ENCODE measurements at regions of chr10 and their contacts with region 1.

Region 1: DNA sequence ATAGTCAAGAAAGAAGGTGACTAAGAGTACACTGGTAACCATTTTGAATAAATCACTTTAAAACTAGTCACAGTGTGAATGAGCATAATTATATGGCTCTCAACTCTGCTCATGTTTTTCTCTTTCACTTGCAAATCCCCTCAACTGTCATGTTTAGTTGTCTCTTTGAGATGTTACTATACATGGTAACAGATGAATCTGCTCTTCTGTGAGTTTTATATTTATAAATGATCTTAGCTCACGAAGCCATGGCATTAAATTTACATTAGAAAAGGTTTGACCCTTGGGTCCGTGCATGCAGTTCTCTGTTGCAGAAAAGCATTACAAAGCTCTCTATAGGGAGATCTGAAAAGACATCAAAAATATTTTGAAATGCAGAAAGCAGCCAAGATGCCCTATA is 33.0 kb upstream of the LRRTM3 start:
- DNase-seq: no peak
- H3K4me3 ChIP-seq: no peak overlapping the region
- H3K27ac ChIP-seq: no peak overlapping the region
- H3K4me1 ChIP-seq: no peaks in the 10 kb centered on the region
- H3K27me3 ChIP-seq: no peaks in the 10 kb centered on the region
- CTCF ChIP-seq: no peak
- EP300 ChIP-seq: no peak
- POLR2A ChIP-seq: no peak

Region 2: DNA sequence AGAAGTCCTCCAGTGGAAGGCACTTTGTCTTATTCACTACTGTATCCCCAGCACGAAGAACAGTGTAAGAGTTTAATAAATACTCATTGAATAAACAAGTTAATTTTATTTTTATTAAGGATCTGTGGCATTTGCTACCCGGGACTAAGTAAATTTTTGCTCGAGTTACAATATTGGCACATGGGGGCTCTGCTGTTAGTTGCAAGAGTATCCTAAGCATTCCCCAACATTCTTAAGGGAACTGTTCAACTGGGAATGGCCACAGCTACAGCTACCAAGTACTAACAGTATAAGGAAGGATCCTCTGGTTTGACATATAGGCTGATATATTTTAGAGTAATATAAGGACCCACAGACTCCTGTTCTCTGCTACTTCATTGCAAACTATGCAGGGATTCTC is 24.2 kb after region 1 on chr10:
- in situ Hi-C with region 1: no loop called
- intact Hi-C with region 1: loop called (anchors 2 kb)
- DNase-seq: no peak
- H3K4me3 ChIP-seq: no peak overlapping the region
- H3K27ac ChIP-seq: no peak overlapping the region
- H3K4me1 ChIP-seq: no peaks in the 10 kb centered on the region
- H3K27me3 ChIP-seq: no peaks in the 10 kb centered on the region
- CTCF ChIP-seq: no peak
- EP300 ChIP-seq: no peak
- POLR2A ChIP-seq: no peak

Region 3: DNA sequence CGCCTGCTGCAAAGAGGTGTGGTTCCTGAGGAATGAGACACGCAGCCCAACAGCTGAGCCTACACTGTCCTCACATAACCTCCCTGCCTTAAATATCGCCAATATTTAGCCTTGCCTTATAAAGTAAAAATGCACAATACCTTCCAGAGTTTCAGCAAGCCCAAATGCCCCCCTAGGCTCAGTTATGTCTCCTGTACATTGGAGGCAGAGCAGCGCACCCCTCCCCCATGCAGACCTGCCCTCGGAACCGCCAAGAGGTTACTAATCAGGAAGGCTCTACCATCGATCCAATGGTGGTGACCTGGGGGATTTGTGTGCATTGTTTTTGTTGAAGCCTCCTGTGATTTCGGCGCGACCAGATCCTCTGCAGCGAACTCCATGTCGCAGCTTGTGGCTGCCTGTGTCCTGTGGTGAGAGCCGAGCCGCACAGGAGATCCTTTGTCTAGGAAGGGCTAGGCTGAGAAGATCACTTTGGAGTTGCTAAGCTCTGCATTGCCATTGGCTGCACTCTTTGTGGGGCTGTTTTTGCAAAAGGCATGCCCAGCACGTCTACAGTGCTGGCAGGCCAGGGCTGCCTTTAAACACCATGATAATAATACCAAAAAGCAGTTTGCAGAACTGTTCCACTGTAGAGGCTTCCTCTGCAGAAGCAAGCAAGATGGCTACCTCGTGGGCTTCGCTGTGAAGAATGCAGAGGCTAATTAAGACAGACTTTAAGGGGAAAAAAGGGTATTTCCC is 1707.3 kb after region 1 on chr10:
- in situ Hi-C with region 1: no loop called
- intact Hi-C with region 1: no loop called
- DNase-seq: peak; percentile 66
- H3K4me3 ChIP-seq: peak overlapping the region; percentile 6 to 49 (median 31)
- H3K27ac ChIP-seq: peak overlapping the region; percentile 56 to 78 (median 69)
- H3K4me1 ChIP-seq: peaks cover 9 to 40% (median 33%) of the 10 kb centered on the region in 4 donors
- H3K27me3 ChIP-seq: no peaks in the 10 kb centered on the region
- CTCF ChIP-seq: no peak
- EP300 ChIP-seq: no peak
- POLR2A ChIP-seq: no peak